Endothelial cell of umbilical vein (primary cell): ENCODE measurements at regions of chr11 and their contacts with region 1.

Region 1: DNA sequence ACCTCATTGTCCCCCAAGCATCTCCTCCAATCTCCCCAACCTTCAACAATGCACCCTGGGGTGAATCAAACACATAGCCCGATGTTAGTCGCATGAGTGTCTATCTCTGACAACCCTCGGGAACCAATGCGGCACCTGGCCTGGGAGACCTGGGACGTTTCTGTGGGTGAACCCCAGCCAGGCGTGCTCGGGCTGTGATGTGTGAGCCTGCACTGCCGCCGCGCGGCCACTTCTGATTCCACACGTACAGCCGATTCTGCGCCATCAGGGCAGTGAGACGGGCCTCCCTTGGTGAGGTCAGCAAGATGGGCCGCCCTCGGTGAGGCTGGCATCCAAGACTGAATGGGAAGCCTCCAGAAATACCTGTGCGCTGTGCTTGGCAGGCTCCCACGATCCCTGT is 5.2 kb upstream of the H19 start:
- DNase-seq: no peak
- H3K4me3 ChIP-seq: no peak overlapping the region
- H3K27ac ChIP-seq: no peak overlapping the region
- H3K4me1 ChIP-seq: no peaks in the 10 kb centered on the region
- H3K27me3 ChIP-seq: no peaks in the 10 kb centered on the region
- CTCF ChIP-seq: no peak
- POLR2A ChIP-seq: no peak

Region 2: GRCh38 chr11:1832211-1832919 is 170.4 kb before region 1 on chr11:
- CTCF ChIA-PET with region 1: interaction called, 66 read pairs
- POLR2A ChIA-PET with region 1: no interaction called
- dilution Hi-C with region 1: no loop called
- intact Hi-C with region 1: no loop called
- DNase-seq: no peak
- H3K4me3 ChIP-seq: no peak overlapping the region
- H3K27ac ChIP-seq: no peak overlapping the region
- H3K4me1 ChIP-seq: peaks cover 2% of the 10 kb centered on the region
- H3K27me3 ChIP-seq: no peaks in the 10 kb centered on the region
- CTCF ChIP-seq: peak; percentile 87 to 97
- POLR2A ChIP-seq: no peak

Region 3: GRCh38 chr11:1837171-1838076 is 165.4 kb before region 1 on chr11:
- CTCF ChIA-PET with region 1: interaction called, 66 read pairs
- POLR2A ChIA-PET with region 1: no interaction called
- dilution Hi-C with region 1: no loop called
- intact Hi-C with region 1: no loop called
- DNase-seq: peak; percentile 19
- H3K4me3 ChIP-seq: no peak overlapping the region
- H3K27ac ChIP-seq: no peak overlapping the region
- H3K4me1 ChIP-seq: no peaks in the 10 kb centered on the region
- H3K27me3 ChIP-seq: no peaks in the 10 kb centered on the region
- CTCF ChIP-seq: peak; percentile 67 to 92
- POLR2A ChIP-seq: no peak

Region 4: GRCh38 chr11:1876361-1877063 is 126.3 kb before region 1 on chr11:
- CTCF ChIA-PET with region 1: interaction called, 23 read pairs
- POLR2A ChIA-PET with region 1: no interaction called
- dilution Hi-C with region 1: no loop called
- intact Hi-C with region 1: no loop called
- DNase-seq: no peak
- H3K4me3 ChIP-seq: no peak overlapping the region
- H3K27ac ChIP-seq: no peak overlapping the region
- H3K4me1 ChIP-seq: no peaks in the 10 kb centered on the region
- H3K27me3 ChIP-seq: no peaks in the 10 kb centered on the region
- CTCF ChIP-seq: peak; percentile 61 to 76
- POLR2A ChIP-seq: no peak

Region 5: DNA sequence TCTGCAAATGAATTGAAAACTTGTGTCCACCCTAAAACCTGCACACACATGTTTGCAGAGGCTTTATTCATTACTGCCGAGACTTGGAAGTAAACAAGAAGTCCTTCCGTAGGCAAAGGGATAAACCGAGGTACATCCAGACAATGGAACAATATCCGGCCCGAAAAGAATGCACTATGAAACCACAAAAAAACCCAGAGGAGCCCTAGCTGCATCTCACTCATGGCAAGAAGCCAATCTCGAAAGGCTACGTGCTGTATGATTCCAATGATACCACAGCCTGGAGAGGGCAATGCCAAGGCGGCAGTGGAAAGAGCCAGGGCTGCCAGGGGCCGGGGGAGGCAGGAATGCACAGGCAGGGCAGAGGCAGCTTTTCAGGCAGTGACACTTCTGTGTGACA is 58.8 kb before region 1 on chr11:
- CTCF ChIA-PET with region 1: interaction called, 22 read pairs
- POLR2A ChIA-PET with region 1: no interaction called
- dilution Hi-C with region 1: no loop called
- intact Hi-C with region 1: no loop called
- DNase-seq: peak; percentile 24
- H3K4me3 ChIP-seq: no peak overlapping the region
- H3K27ac ChIP-seq: no peak overlapping the region
- H3K4me1 ChIP-seq: no peaks in the 10 kb centered on the region
- H3K27me3 ChIP-seq: no peaks in the 10 kb centered on the region
- CTCF ChIP-seq: no peak
- POLR2A ChIP-seq: no peak

Region 6: GRCh38 chr11:2166091-2166851 is 163.5 kb after region 1 on chr11:
- CTCF ChIA-PET with region 1: no interaction called
- POLR2A ChIA-PET with region 1: no interaction called
- dilution Hi-C with region 1: no loop called
- intact Hi-C with region 1: no loop called
- DNase-seq: no peak
- H3K4me3 ChIP-seq: no peak overlapping the region
- H3K27ac ChIP-seq: no peak overlapping the region
- H3K4me1 ChIP-seq: no peaks in the 10 kb centered on the region
- H3K27me3 ChIP-seq: no peaks in the 10 kb centered on the region
- CTCF ChIP-seq: peak; percentile 37 to 58
- POLR2A ChIP-seq: no peak